Aorta (tissue), 5 donors: ENCODE measurements at regions of chr3 and their contacts with region 1.

Region 1: GRCh38 chr3:141402476-141403171 is 34.3 kb downstream of the ZBTB38 start:
- DNase-seq: peak; percentile 88 to 90
- ATAC-seq: peak; percentile 87
- H3K4me3 ChIP-seq: peak overlapping the region; percentile 92 to 96
- H3K27ac ChIP-seq: peak overlapping the region; percentile 88 to 97
- H3K4me1 ChIP-seq: peaks cover 0 to 6% of the 10 kb centered on the region in 2 donors
- H3K27me3 ChIP-seq: no peaks in the 10 kb centered on the region

Region 2: DNA sequence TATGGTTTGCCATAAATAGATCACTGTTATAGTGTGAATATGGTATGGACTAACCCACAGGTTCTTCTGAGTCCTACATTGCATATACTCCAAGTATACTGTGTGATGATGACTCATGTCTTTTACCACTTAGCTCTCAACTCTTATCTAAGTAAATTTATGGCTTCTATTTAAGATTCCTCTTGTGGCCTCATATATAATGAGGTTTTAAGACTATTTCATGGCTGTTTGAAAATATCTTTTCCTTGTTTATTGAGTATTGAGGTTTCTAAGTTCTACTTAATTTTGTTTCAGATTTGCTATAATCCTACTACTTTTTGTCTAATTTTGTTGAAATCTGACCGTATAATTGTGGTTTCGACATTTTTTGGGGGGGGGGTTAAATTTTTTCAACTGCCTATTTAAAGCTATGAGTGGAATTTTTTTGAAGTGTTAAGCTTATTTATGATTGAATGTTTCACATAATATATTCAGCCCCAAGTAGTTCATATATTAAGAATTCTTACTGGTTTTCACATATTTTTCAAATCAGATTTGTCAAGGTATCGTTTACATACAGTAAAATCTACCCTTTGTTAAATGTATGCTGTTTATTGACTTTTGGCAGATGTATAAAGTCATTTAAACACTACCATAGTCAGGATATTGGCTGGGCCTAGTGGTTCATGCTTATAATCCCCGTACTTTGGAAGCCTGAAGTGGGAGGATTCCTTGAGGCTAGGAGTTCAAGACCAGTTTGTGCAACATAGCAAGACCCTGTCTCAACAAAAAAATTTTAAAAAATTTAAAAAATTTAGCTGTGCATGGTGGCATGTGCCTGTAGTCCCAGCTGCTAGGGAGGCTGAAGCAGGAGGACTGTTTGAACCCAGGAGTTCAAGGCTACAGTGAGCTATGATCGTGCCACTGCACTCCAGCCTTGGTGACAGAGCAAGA is 449.3 kb before region 1 on chr3:
- intact Hi-C with region 1: no loop called
- DNase-seq: no peak
- ATAC-seq: no peak
- H3K4me3 ChIP-seq: no peak overlapping the region
- H3K27ac ChIP-seq: no peak overlapping the region
- H3K4me1 ChIP-seq: peaks cover 0 to 2% of the 10 kb centered on the region in 2 donors
- H3K27me3 ChIP-seq: no peaks in the 10 kb centered on the region

Region 3: DNA sequence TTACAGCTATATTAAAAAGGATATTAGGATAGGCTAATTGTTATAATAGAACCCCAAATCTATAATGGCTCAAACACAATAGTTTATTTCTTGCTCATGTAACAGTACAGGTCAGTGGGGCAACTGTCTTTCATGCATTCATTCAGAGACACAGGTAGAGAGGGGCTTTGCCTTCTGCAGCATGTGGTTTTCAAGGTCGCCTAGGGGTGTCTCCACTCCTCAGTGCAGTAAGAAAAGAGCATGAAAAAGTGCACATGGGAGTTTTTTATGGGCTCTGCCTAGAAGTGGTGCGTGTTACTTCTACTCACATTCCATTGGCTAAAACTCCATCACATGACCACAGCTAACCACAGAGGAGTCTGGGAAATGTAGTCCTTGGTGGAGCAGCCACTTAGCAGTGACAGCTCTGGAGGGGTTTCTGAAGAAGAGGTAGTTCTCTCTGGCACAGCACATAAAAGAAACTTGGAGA is 32.5 kb before region 1 on chr3:
- intact Hi-C with region 1: loop called in 1 of 2 experiments (anchors 1 kb)
- DNase-seq: no peak
- ATAC-seq: peak; percentile 88
- H3K4me3 ChIP-seq: peak overlapping the region; percentile 50 to 55
- H3K27ac ChIP-seq: no peak overlapping the region
- H3K4me1 ChIP-seq: peaks cover 0 to 1% of the 10 kb centered on the region in 2 donors
- H3K27me3 ChIP-seq: no peaks in the 10 kb centered on the region

Region 4: DNA sequence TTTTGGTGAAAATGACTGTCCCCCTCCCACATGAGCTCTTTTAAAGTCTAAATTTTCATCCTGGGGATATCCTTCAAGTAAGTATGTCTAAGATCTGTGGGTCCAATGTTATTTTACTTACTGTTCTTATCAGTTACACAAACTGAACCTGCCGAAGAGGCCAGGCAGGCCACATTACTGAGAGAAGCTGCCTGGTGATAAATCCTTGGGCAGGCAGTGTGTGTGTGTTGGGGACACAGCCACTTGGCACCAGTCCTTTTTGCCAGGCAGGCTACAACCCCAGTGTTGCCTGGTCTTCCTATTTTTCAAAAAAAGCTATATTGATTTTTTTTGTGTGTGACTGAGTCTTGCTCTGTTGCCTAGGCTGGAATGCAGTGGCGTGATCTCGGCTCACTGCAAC is 33.6 kb after region 1 on chr3:
- intact Hi-C with region 1: loop called (anchors 5 kb)
- DNase-seq: no peak
- ATAC-seq: no peak
- H3K4me3 ChIP-seq: no peak overlapping the region
- H3K27ac ChIP-seq: peak overlapping the region; percentile 17 to 43
- H3K4me1 ChIP-seq: peaks cover 4 to 17% of the 10 kb centered on the region in 2 donors
- H3K27me3 ChIP-seq: no peaks in the 10 kb centered on the region

Region 5: DNA sequence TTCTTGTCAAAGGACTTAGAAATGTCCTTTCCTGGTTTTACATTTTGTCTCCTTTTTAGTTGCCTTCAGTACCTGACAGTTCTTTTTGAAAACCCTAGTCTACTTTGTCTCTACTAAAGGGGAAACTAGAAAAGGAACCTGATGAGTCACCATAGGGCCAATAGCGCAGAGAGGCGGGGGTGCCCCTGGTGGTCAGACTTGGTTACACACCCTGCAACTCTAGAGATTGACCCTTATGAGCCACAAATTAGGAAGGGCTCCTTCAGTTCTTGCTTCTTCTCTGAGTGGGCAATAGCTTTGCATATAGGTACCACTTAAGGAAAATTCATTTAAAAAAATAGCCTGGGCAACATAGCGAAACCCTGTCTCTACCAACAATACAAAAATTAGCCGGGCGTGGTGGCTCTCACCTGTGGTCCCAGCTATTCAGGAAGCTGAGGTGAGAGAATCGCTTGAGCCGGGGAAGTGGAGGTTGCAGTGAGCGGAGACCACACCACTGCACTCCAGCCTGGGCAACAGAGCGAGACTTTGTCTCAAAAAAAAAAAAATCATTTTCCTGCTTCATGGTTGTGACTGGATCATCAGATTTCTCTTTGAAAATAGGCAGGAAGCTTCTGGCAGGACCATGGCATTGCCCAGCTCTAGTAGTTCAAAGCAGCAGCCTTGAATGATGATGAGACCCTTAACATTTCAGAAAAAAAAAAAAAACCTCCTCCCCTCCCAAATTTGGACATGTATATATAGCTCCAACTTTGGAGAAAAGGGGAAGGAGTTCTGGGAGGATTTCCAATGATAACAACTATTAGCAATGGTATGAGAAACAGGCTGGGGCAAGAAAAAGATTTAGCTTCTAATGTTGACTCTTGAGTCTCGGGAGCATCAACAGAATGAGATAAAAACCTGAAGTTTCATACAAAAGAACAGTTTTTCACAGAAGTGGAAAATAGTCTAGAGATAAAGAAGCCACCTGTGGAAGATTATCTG is 39.0 kb after region 1 on chr3:
- intact Hi-C with region 1: loop called (anchors 5 kb)
- DNase-seq: peak; percentile 86 to 92
- ATAC-seq: peak; percentile 90
- H3K4me3 ChIP-seq: peak overlapping the region in 1 of 2 donors; percentile 23
- H3K27ac ChIP-seq: peak overlapping the region; percentile 91 to 96
- H3K4me1 ChIP-seq: peaks cover 5 to 17% of the 10 kb centered on the region in 2 donors
- H3K27me3 ChIP-seq: no peaks in the 10 kb centered on the region

Region 6: GRCh38 chr3:141452036-141452435 is 49.4 kb after region 1 on chr3:
- intact Hi-C with region 1: loop called in 1 of 2 experiments (anchors 5 kb)
- DNase-seq: no peak
- ATAC-seq: peak; percentile 81
- H3K4me3 ChIP-seq: no peak overlapping the region
- H3K27ac ChIP-seq: peak overlapping the region in 1 of 2 donors; percentile 37
- H3K4me1 ChIP-seq: peaks cover 0 to 3% of the 10 kb centered on the region in 2 donors
- H3K27me3 ChIP-seq: no peaks in the 10 kb centered on the region